PC-9 (cell line): ENCODE measurements at regions of chr6 and their contacts with region 1.

Region 1: GRCh38 chr6:30752157-30752927 is 8.0 kb upstream of the IER3 start:
- DNase-seq: peak; percentile 98 to 100
- H3K4me3 ChIP-seq: no peak overlapping the region
- H3K27ac ChIP-seq: peak overlapping the region; percentile 100
- H3K4me1 ChIP-seq: peaks cover 70% of the 10 kb centered on the region
- H3K27me3 ChIP-seq: no peaks in the 10 kb centered on the region
- CTCF ChIP-seq: no peak

Region 2: DNA sequence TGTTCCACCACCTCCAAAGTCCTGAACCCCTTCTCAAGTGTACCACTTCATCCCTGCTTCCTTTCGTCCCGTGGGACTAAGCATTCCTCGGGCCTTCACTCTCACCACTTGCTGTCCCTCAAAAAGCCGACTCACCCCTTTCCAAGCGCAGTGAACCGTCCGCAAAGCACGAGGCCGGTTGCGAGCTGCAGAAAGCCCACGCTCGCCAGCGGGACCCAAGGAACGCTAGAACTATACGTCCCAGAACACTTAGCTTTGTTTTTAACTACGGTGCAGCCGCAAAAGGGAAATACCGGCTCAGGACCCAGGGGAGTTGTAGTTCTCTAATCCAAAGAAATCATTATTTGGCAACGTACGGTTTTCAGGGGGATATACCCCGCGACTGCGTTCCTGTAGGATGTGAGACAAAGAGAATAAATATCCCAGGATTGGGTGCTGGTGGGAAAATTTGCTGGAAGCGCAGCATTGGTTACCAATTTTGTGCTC is 691.7 kb before region 1 on chr6:
- CTCF ChIA-PET with region 1: no interaction called
- POLR2A ChIA-PET with region 1: no interaction called
- intact Hi-C with region 1: no loop called
- DNase-seq: no peak
- H3K4me3 ChIP-seq: peak overlapping the region; percentile 95
- H3K27ac ChIP-seq: peak overlapping the region; percentile 34; the same call in 1 of the 2 replicates
- H3K4me1 ChIP-seq: peaks cover 18% of the 10 kb centered on the region
- H3K27me3 ChIP-seq: no peaks in the 10 kb centered on the region
- CTCF ChIP-seq: no peak

Region 3: DNA sequence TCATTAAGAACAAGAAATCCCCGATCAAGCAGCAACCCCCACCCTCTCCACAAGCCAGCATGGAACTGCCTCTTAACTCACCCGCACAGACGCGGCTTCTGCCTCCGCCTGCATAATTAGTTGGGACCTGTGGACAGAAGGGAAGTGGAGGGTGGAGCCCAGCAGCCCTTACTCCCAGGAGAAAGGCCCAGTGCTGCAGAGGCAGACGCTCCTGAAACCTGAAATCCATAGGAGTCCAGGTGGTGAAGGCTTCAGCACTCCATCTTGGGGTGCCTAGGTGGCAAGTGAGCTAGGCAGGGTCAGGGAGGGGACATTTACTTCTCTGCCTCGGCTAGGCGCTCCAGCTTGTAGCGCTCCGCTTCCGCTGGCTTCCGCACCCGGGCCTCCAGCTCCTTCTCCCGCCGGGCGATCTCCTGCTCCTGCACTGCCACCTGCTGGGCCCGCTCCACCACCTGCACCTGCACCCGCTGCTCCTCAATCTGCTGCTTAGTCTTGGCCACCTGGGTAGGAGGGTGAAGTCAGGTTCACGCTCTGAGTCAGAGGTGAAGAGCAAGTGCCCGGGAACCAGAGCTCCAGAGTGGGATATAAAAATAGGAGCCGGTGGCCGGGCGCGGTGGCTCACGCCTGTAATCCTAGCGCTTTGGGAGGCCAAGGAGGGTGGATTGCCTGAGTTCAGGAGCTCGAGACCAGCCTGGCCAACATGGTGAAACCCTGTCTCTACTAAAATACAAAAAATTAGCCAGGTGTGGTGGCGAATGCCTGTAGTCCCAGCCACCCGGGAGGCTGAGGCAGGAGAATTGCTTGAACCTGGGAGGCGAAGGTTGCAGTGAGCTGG is 21.5 kb before region 1 on chr6:
- CTCF ChIA-PET with region 1: interaction called, 21 read pairs
- POLR2A ChIA-PET with region 1: no interaction called
- intact Hi-C with region 1: no loop called
- DNase-seq: peak; percentile 89 to 92
- H3K4me3 ChIP-seq: no peak overlapping the region
- H3K27ac ChIP-seq: peak overlapping the region; percentile 18; the same call in 1 of the 2 replicates
- H3K4me1 ChIP-seq: peaks cover 16% of the 10 kb centered on the region
- H3K27me3 ChIP-seq: no peaks in the 10 kb centered on the region
- CTCF ChIP-seq: peak; percentile 80

Region 4: GRCh38 chr6:30763302-30764193 is 11.2 kb after region 1 on chr6:
- CTCF ChIA-PET with region 1: interaction called, 12 read pairs
- POLR2A ChIA-PET with region 1: interaction called, 28 read pairs
- intact Hi-C with region 1: no loop called
- DNase-seq: no peak
- H3K4me3 ChIP-seq: no peak overlapping the region
- H3K27ac ChIP-seq: peak overlapping the region; percentile 78
- H3K4me1 ChIP-seq: peaks cover 63% of the 10 kb centered on the region
- H3K27me3 ChIP-seq: no peaks in the 10 kb centered on the region
- CTCF ChIP-seq: no peak

Region 5: DNA sequence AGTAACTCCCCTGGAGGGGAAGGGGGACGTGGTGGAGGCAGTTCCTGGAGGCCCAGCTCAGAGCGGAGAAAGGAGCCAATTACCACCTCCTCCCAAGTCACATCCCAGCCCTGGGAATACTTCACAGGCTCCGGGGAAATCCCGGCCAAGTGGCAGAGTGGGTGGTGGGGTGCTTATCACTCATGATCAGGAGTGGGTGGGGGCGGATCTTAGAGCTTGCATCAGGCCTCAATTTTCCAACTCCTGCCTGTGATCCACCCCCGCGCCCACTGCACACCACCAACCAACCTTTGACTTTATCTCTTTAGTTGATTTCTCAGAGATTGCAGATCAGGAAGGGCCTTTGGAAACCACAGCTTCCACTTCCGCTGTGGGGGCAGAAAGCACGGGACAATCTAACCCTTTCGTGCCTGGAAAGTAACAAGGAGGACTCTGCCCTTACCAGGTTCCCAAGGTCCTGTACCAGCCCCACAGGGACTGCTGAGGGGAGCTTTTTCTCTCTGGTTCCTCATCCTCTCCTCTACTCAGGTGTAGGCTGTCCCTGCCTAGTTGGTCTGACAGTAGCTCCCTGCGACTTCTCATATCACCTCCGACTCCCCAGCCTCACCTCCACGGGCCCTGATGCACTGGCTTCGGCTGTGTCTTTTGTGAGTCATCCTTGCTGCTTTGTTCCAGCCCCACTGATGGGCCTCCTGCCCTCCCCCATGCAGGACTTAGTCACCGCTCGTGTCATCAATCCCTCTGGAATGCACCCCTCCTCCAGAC is 16.9 kb after region 1 on chr6:
- CTCF ChIA-PET with region 1: interaction called, 12 read pairs
- POLR2A ChIA-PET with region 1: interaction called, 28 read pairs
- intact Hi-C with region 1: loop called (anchors 1 kb)
- DNase-seq: peak; percentile 92
- H3K4me3 ChIP-seq: peak overlapping the region; percentile 41; the same call in 1 of the 2 replicates
- H3K27ac ChIP-seq: peak overlapping the region; percentile 94
- H3K4me1 ChIP-seq: peaks cover 56% of the 10 kb centered on the region
- H3K27me3 ChIP-seq: no peaks in the 10 kb centered on the region
- CTCF ChIP-seq: no peak

Region 6: GRCh38 chr6:30781743-30782424 is 29.5 kb after region 1 on chr6:
- CTCF ChIA-PET with region 1: interaction called, 6 read pairs
- POLR2A ChIA-PET with region 1: interaction called, 10 read pairs
- intact Hi-C with region 1: loop called (anchors 2 kb)
- DNase-seq: peak; percentile 91 to 97
- H3K4me3 ChIP-seq: peak overlapping the region; percentile 17; the same call in 1 of the 2 replicates
- H3K27ac ChIP-seq: peak overlapping the region; percentile 93
- H3K4me1 ChIP-seq: peaks cover 51% of the 10 kb centered on the region
- H3K27me3 ChIP-seq: no peaks in the 10 kb centered on the region
- CTCF ChIP-seq: no peak

Region 7: GRCh38 chr6:30821862-30822782 is 69.8 kb after region 1 on chr6:
- CTCF ChIA-PET with region 1: interaction called, 13 read pairs
- POLR2A ChIA-PET with region 1: interaction called, 9 read pairs
- intact Hi-C with region 1: loop called (anchors 1 kb)
- DNase-seq: peak in 1 of 2 experiments; percentile 45
- H3K4me3 ChIP-seq: no peak overlapping the region
- H3K27ac ChIP-seq: peak overlapping the region; percentile 96
- H3K4me1 ChIP-seq: peaks cover 72% of the 10 kb centered on the region
- H3K27me3 ChIP-seq: no peaks in the 10 kb centered on the region
- CTCF ChIP-seq: peak; percentile 73

Region 8: GRCh38 chr6:31588871-31589650 is 836.7 kb after region 1 on chr6:
- CTCF ChIA-PET with region 1: no interaction called
- POLR2A ChIA-PET with region 1: interaction called, 10 read pairs
- intact Hi-C with region 1: no loop called
- DNase-seq: no peak
- H3K4me3 ChIP-seq: no peak overlapping the region
- H3K27ac ChIP-seq: no peak overlapping the region
- H3K4me1 ChIP-seq: no peaks in the 10 kb centered on the region
- H3K27me3 ChIP-seq: no peaks in the 10 kb centered on the region
- CTCF ChIP-seq: no peak

Region 9: DNA sequence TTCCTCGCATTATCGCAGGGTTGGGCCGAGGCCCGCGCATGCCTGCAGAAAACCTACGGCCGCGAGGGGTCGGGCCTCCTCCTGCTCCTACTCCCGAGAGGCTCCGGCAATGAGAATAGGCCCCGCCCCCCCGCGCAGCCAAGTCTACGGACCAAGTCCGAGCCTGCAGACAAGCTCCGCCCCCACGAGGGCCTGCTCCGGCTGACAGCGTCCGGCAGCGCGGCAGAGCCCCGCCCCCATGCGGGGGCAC is 1443.2 kb after region 1 on chr6:
- CTCF ChIA-PET with region 1: no interaction called
- POLR2A ChIA-PET with region 1: no interaction called
- intact Hi-C with region 1: no loop called
- DNase-seq: peak; percentile 98 to 100
- H3K4me3 ChIP-seq: peak overlapping the region; percentile 96; the same call in 1 of the 2 replicates
- H3K27ac ChIP-seq: no peak overlapping the region
- H3K4me1 ChIP-seq: peaks cover 18% of the 10 kb centered on the region
- H3K27me3 ChIP-seq: peaks cover 4% of the 10 kb centered on the region
- CTCF ChIP-seq: no peak; the same call in none of the 2 replicates